Activated CD4-positive, alpha-beta T cell treated with anti-CD3 and anti-CD28 coated beads for 36 hours (primary cell): ENCODE measurements at regions of chr6 and their contacts with region 1.

Region 1: DNA sequence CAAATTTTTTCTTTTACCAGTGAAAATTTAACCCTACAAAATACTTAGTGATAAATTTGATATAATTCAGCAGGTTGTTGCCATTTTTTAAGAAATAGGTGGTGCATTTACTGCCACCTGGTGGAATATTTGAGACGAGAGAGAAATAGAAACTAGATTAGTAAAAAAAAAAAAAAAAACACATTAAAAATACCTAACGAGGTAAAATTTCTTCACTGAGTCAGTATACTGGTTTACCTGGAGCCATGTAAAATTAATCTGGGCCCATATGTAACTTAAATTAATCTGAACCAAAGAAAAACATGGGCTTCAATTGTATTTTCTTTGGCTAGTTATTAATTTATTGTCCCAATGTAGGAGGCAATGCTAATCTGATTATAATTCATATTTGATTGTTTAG is 520.8 kb downstream of the EPM2A start:
- DNase-seq: peak; percentile 5
- ATAC-seq: no peak
- H3K4me3 Mint-ChIP-seq: no peak overlapping the region
- H3K27ac Mint-ChIP-seq: no peak overlapping the region
- H3K4me1 Mint-ChIP-seq: peaks cover 7% of the 10 kb centered on the region
- H3K27me3 Mint-ChIP-seq: peaks cover 2% of the 10 kb centered on the region

Region 2: GRCh38 chr6:144104898-144105487 is 1109.6 kb before region 1 on chr6:
- CTCF ChIA-PET with region 1: no interaction called
- POLR2A ChIA-PET with region 1: no interaction called
- intact Hi-C with region 1: loop called in 1 of 2 experiments (anchors 5 kb)
- DNase-seq: peak; percentile 30
- ATAC-seq: peak; percentile 78
- H3K4me3 Mint-ChIP-seq: no peak overlapping the region
- H3K27ac Mint-ChIP-seq: no peak overlapping the region
- H3K4me1 Mint-ChIP-seq: peaks cover 8% of the 10 kb centered on the region
- H3K27me3 Mint-ChIP-seq: no peaks in the 10 kb centered on the region

Region 3: DNA sequence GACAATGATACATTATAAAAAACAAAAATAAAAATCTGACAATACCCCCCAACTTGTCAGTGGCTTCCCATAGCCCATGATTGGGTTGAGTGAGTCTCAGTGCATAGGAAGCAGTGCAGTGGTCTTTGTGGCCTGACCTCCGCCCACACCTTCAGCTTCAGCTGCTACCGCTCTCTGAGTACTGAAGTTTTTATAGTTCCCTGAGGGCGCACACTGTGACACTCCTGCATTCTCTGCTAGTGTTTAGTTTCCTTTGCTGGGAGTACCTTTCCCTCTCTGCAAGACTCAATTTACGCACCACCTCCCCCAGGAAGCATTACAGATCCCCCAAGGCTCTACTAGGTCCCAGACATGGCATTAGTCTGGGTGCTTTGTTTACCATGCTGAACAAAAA is 488.4 kb before region 1 on chr6:
- CTCF ChIA-PET with region 1: no interaction called
- POLR2A ChIA-PET with region 1: no interaction called
- intact Hi-C with region 1: no loop called
- DNase-seq: peak; percentile 37
- ATAC-seq: peak; percentile 55
- H3K4me3 Mint-ChIP-seq: no peak overlapping the region
- H3K27ac Mint-ChIP-seq: no peak overlapping the region
- H3K4me1 Mint-ChIP-seq: peaks cover 23% of the 10 kb centered on the region
- H3K27me3 Mint-ChIP-seq: no peaks in the 10 kb centered on the region

Region 4: GRCh38 chr6:144778773-144779492 is 435.6 kb before region 1 on chr6:
- CTCF ChIA-PET with region 1: no interaction called
- POLR2A ChIA-PET with region 1: no interaction called
- intact Hi-C with region 1: loop called in 1 of 2 experiments (anchors 10 kb)
- DNase-seq: no peak
- ATAC-seq: no peak
- H3K4me3 Mint-ChIP-seq: no peak overlapping the region
- H3K27ac Mint-ChIP-seq: no peak overlapping the region
- H3K4me1 Mint-ChIP-seq: peaks cover 2% of the 10 kb centered on the region
- H3K27me3 Mint-ChIP-seq: no peaks in the 10 kb centered on the region

Region 5: GRCh38 chr6:144931172-144932035 is 283.2 kb before region 1 on chr6:
- CTCF ChIA-PET with region 1: no interaction called
- POLR2A ChIA-PET with region 1: no interaction called
- intact Hi-C with region 1: loop called in 1 of 2 experiments (anchors 1 kb)
- DNase-seq: peak; percentile 60
- ATAC-seq: peak; percentile 64
- H3K4me3 Mint-ChIP-seq: no peak overlapping the region
- H3K27ac Mint-ChIP-seq: no peak overlapping the region
- H3K4me1 Mint-ChIP-seq: no peaks in the 10 kb centered on the region
- H3K27me3 Mint-ChIP-seq: peaks cover 4% of the 10 kb centered on the region

Region 6: GRCh38 chr6:144939921-144940320 is 274.6 kb before region 1 on chr6:
- CTCF ChIA-PET with region 1: no interaction called
- POLR2A ChIA-PET with region 1: no interaction called
- intact Hi-C with region 1: loop called in 1 of 2 experiments (anchors 10 kb)
- DNase-seq: no peak
- ATAC-seq: no peak
- H3K4me3 Mint-ChIP-seq: no peak overlapping the region
- H3K27ac Mint-ChIP-seq: no peak overlapping the region
- H3K4me1 Mint-ChIP-seq: no peaks in the 10 kb centered on the region
- H3K27me3 Mint-ChIP-seq: peaks cover 2% of the 10 kb centered on the region

Region 7: GRCh38 chr6:145633981-145634627 is 419.5 kb after region 1 on chr6:
- CTCF ChIA-PET with region 1: no interaction called
- POLR2A ChIA-PET with region 1: no interaction called
- intact Hi-C with region 1: loop called in 1 of 2 experiments (anchors 5 kb)
- DNase-seq: peak; percentile 91
- ATAC-seq: peak; percentile 92
- H3K4me3 Mint-ChIP-seq: no peak overlapping the region
- H3K27ac Mint-ChIP-seq: no peak overlapping the region
- H3K4me1 Mint-ChIP-seq: no peaks in the 10 kb centered on the region
- H3K27me3 Mint-ChIP-seq: no peaks in the 10 kb centered on the region